Vagina (tissue), 2 donors: ENCODE measurements at regions of chr3 and their contacts with region 1.

Region 1: DNA sequence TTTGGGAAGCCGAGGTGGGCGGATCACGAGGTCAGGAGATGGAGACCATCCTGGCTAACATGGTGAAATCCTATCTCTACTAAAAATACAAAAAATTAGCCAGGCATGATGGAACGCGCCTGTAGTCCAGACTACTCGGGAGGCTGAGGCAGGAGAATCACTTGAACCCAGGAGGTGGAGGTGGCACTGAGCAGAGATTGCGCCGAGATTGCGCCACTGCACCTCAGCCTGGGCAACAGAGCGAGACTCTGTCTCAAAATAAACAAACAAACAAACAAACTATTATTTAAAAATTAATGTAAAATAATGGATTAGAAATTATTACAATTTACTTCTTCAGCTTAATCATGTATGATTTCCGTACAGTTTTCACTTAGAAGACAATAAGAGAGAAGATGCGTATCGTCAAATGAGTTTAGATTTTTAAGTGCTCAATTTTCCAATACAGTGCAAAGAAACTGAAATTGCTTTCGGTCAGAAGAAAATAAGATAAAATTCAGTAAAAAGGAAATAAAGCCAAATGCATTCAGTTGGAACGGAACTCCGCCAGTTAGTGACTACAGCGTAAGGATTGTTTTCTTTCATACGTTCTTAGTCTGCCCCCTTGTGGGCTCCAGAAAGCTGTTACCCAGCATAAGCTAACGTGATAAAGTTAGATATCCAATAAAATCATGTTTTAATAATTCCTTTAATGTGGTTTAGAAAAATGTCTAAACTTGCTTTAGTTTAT is 24.8 kb downstream of the AADAC start:
- DNase-seq: no peak
- H3K4me3 ChIP-seq: peak overlapping the region in 1 of 2 donors; percentile 26
- H3K27ac ChIP-seq: no peak overlapping the region
- H3K4me1 ChIP-seq: peaks cover 13% of the 10 kb centered on the region
- H3K27me3 ChIP-seq: no peaks in the 10 kb centered on the region
- CTCF ChIP-seq: peak in 2 of 3 experiments; percentile 71 to 84
- POLR2A ChIP-seq: no peak

Region 2: DNA sequence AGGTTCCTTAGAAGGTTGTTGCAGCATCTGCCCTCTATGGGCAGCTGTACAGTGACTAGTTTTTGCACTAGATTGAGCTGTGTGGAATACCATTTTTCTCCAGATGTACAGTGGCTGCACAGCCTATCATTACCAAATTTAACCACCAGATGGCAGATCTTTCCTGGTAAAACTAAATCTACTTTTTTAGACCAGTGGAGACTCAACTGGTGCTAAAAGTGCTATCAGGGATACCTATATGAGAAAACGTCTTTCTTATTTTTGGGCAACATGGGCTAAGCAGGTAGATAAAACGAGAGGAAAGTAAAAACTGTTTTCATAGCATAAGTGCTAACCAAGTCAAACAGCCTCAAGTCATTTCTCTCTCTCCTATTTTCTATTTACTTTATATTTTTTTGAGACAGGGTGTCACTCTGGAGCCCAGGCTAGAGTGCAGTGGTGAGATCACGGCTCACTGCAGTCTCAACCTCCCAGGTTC is 399.1 kb before region 1 on chr3:
- intact Hi-C with region 1: loop called (anchors 5 kb)
- DNase-seq: no peak
- H3K4me3 ChIP-seq: no peak overlapping the region
- H3K27ac ChIP-seq: no peak overlapping the region
- H3K4me1 ChIP-seq: peaks cover under 1% of the 10 kb centered on the region
- H3K27me3 ChIP-seq: no peaks in the 10 kb centered on the region
- CTCF ChIP-seq: peak; percentile 61 to 79 (median 62)
- POLR2A ChIP-seq: no peak